ENCODE measurements at regions of chr7 and their contacts with region 1.

Region 1: DNA sequence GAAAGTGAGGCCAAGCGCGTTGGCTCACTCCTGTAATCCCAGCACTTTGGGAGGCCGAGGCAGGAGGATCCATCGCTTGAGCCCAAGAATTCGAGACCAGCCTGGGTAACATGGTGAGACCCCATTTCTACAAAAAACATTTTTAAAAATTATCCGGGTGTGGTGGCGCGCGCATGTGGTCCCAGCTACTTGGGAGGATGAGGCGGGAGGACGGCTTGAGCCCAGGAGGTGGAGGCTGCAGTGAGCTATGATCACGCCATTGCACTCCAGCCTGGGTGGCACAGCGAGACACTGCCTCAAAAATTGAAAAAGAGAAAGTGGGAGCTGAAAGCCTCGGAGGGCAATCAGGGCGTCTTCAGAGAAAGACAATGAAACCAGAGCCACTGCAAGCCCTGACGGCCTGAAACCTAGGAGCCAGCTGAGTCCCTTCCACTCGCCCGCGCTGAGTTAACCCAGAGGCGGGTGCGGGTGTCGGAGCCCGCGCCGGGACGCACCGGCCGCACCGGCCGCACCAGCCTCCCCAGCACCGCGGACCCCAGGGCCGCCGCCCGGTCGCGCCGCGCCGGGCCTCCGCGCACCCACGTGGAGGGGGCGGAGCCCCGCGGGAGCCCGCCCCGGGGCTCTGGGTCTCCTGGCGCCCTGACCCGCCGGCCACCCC is 22.4 kb downstream of the ZFAND2A start:
- DNase-seq: no peak
- H3K4me3 Mint-ChIP-seq: peak overlapping the region; percentile 87
- H3K27ac Mint-ChIP-seq: peak overlapping the region; percentile 93
- H3K4me1 Mint-ChIP-seq: peaks cover 10% of the 10 kb centered on the region
- H3K27me3 Mint-ChIP-seq: no peaks in the 10 kb centered on the region

Region 2: DNA sequence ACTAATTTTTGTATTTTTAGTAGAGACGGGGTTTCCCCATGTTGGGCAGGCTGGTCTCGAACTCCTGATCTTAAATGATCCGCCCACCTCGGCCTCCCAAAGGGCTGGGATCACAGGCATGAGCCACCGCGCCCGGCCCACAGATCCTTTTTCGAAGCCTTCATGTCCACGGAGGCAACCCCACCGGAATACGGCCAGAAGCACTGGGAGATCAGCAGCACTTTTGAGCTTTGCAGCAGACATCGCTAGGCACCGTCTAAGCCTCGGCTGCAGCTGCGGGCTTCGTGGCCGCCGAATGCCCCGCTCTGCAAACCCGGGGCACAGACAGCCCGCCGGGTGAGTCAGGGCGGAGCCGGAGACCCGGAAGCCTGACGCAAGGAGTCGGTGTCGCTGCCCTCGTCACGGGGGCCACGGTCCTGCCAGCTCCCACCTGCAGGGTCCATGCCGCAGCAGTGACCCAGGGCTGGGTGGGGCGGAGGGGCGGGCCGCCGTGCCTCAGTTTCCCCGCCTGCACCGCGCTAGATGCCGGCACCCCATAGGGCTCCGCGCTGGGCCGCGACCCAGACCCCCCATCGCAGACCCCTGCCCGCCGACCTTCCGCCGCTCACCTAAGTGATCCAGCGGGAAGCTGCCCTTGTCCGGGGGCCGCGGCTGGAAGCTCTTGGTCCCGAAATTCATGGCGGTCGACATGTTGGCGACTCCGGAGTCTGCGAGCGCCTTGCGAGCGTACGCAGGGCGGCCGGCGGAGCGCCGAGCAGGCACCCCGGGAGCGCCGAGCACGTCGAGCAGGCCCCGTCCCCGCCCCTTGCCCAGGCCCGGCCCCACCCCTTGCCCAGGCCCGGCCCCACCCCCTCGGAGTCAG is 162.6 kb before region 1 on chr7 and contains the start of gene COX19:
- intact Hi-C with region 1: loop called (anchors 10 kb)
- DNase-seq: peak; percentile 96
- H3K4me3 Mint-ChIP-seq: peak within 1 kb of the TSS; percentile 95
- H3K27ac Mint-ChIP-seq: peak within 1 kb of the TSS; percentile 93
- H3K4me1 Mint-ChIP-seq: peaks cover 13% of the 10 kb centered on the region
- H3K27me3 Mint-ChIP-seq: no peaks in the 10 kb centered on the region
- total RNA-seq, gene COX19: 15.3 and 22.4 TPM in 2 replicates

Region 3: DNA sequence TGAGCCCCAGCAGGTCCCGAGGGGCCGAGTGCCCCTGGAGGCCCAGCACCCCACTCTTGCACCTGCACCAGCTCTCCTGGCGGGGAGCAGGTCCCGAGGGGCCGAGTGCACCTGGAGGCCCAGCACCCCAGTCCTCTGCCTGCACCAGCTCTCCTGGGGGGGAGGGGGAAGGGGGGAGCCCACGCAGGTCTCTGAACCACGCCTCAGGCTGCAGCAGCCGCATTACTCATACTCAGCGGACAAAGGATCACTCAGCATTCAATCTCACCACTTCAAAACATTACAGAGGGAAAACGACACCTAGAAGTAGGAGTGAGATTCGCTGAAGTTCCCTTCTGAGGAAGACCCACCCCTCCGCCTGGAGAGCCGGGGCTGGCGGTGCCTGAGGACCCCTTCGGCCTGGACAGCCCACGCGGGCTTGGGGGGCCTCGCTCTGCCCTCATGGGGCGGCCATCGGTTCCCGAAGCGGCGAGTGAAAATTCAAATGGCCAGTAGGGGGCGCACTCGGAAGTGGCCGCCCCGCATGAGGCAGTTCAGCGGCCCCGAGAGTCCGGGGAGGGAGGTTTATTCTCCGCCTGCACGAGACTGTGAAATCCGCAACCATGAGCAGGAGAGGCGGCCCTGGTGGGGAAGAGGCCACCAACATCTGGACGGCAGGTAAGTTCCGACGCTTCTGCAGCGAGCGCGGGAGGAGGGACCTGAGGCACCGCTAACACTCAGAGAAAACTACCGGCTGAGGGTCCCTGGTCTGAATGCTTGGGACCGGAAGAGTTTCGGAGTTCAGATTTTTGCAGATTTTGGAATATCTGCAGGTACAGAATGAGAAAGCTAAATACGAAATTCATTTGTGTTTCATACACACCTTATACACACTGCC is 50.8 kb before region 1 on chr7:
- intact Hi-C with region 1: loop called (anchors 1 kb)
- DNase-seq: peak; percentile 93
- H3K4me3 Mint-ChIP-seq: peak overlapping the region; percentile 79
- H3K27ac Mint-ChIP-seq: peak overlapping the region; percentile 11
- H3K4me1 Mint-ChIP-seq: peaks cover 9% of the 10 kb centered on the region
- H3K27me3 Mint-ChIP-seq: peaks cover 2% of the 10 kb centered on the region

Region 4: DNA sequence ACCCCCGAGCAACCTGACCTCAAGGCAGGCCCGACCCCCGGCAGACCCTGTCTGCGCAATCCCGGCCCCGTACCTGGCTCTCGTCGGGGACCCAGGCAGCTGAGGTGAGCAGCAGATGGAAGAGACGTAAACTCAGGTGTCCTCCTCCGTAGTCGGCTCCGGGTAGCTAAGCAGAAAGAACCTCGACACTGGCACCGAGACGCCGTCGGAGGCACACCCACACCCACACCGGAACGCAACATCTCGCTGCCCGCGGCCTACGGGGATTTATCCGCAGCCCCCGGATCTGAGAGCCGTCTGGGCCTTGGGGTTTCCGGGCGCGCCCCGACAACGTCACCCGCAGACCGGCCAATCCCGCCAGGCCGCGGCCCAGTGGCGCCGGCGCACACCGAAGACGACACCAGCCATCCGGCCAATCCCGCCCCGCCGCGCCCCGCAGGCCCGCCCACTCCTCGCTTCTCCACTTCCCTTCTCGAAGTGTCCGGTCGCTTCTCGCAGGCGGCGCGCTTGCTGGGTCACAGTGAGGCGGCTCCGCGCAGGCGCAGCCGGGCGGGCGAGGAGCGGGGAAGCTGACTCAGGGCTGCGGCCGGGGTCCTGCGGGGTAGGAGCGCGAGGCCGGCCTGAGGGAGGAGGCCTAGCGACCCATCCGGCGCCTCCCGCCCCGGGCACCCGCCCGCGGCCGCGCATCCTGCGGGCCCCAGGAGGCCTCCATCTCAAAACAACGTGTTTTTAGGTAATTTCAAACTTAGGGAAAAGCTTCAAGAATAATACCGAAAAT is 22.4 kb after region 1 on chr7 and contains the start of gene ZFAND2A:
- intact Hi-C with region 1: loop called (anchors 1 kb)
- DNase-seq: peak; percentile 100
- H3K4me3 Mint-ChIP-seq: peak within 1 kb of the TSS; percentile 93
- H3K27ac Mint-ChIP-seq: peak within 1 kb of the TSS; percentile 89
- H3K4me1 Mint-ChIP-seq: peaks cover 18% of the 10 kb centered on the region
- H3K27me3 Mint-ChIP-seq: no peaks in the 10 kb centered on the region
- total RNA-seq, gene ZFAND2A: 19.9 and 24.2 TPM in 2 replicates

Measured in activated CD4-positive, alpha-beta T cell treated with anti-CD3 and anti-CD28 coated beads, Interleukin-2, amount 10 ng/mL, durations not matched to agents 24 days and 14 days (primary cell).